AG04450 (cell line): ENCODE measurements at regions of chr1 and their contacts with region 1.

Region 1: GRCh38 chr1:207885129-207886032 is 25.5 kb downstream of the CD34 start:
- DNase-seq: peak; percentile 76
- H3K4me3 ChIP-seq: no peak overlapping the region
- H3K27ac ChIP-seq: no peak overlapping the region
- H3K27me3 ChIP-seq: peaks cover 3% of the 10 kb centered on the region
- CTCF ChIP-seq: peak; percentile 98

Region 2: DNA sequence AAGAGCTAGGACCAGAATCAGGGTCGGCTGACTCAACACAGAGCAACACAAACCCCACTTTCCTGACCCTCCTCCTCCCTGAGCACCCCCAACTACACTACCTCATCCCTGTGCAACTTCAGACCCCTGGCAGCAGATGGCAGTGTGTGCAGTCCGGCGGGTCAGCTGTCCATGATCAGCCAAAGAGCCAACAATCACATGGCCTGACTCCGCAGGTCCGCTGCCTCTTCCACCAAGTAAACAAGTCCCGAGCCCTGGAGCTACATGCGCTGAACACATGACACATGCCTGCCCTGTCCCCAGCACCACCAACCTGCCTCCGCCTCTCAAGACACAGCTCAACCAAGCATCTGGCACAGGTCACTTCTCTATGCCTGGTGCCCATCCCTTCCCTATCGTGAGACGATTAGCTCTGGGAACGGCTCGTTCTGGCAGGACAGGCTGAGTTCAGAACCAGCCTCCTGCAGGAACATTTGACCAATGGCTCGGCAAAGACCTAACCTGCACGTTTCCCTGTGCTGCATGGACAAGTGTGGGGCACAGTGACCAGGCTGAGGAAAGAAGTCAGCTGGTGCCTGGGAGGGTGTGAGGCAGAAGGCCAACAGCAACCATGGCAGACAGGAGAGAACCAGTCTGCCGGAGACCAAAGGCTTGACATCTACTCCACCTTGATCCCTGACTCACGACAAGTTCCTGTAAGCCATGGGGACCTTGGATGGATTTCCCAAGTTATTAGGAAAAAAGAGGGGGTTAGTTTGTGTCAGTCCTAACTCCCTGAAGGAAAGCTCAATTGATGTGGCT is 73.3 kb before region 1 on chr1:
- CTCF ChIA-PET with region 1: interaction called, 12 read pairs
- POLR2A ChIA-PET with region 1: no interaction called
- DNase-seq: no peak
- H3K4me3 ChIP-seq: no peak overlapping the region
- H3K27ac ChIP-seq: no peak overlapping the region
- H3K27me3 ChIP-seq: no peaks in the 10 kb centered on the region
- CTCF ChIP-seq: peak; percentile 45

Region 3: DNA sequence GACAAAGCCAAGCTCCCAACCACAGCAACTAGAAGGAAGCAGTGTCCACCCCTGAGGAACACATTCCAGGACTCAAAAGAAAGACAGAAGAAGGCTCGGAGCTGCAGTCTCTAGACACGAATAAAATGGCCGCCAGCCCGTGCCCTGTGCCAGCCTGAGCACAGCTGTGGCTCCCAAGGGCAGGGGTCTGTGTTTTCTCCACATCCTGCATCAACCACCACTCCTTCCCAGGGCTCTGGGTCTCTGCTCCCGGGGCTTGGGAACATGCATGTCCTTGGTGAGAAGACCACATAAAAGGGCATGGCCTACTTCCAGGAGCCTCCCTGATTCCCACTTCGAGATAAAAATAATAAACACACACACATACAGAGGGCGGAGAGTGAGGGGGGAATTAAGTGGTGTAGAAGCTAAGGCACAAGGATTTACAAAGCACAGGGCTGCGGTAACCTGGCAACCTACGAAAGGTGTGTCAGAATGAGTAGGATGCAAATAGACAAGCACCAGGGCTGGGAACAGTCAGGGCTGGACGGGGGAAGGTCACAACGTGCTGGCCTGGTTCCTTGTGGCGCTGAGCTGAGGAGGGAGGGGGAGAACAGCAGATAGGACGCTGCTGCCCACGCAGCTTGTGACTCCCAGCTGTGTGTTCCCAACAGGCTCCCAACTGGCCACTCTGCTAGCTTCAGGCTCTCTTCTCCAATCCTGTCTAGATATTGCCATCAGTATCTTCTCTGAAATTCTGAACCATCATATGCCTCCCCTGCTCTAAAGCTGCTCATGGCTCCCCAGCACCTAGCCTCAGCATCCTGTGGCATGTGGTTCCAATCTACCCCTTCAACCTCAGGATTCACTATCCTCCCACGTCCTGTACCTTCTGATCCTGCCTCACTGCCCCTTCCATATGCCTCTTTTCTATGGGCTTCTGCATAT is 47.0 kb before region 1 on chr1:
- CTCF ChIA-PET with region 1: interaction called, 13 read pairs
- POLR2A ChIA-PET with region 1: no interaction called
- DNase-seq: no peak
- H3K4me3 ChIP-seq: no peak overlapping the region
- H3K27ac ChIP-seq: no peak overlapping the region
- H3K27me3 ChIP-seq: no peaks in the 10 kb centered on the region
- CTCF ChIP-seq: no peak

Region 4: GRCh38 chr1:207897188-207897587 is 11.8 kb after region 1 on chr1:
- CTCF ChIA-PET with region 1: interaction called, 73 read pairs
- POLR2A ChIA-PET with region 1: no interaction called
- DNase-seq: no peak
- H3K4me3 ChIP-seq: no peak overlapping the region
- H3K27ac ChIP-seq: no peak overlapping the region
- H3K27me3 ChIP-seq: no peaks in the 10 kb centered on the region
- CTCF ChIP-seq: peak; percentile 42

Region 5: DNA sequence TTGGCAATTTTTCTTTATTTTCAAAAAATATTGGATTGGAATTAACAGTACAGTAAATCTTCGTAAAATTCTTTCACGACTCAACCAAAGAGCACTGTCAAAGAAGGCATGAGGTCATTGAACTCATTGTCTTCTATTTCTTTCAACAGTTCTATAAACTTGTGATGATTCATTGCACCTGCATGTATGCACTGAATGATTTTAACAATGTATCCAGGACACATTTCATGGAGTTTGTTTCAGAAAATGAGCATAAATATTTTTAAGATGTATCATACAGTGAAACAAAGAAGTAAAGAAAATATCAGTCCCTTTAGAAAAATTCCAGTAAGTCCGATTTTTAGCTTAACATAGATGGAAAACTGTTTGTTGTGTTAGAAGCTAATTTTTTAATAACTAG is 59.2 kb after region 1 on chr1:
- CTCF ChIA-PET with region 1: interaction called, 28 read pairs
- POLR2A ChIA-PET with region 1: no interaction called
- DNase-seq: no peak
- H3K4me3 ChIP-seq: no peak overlapping the region
- H3K27ac ChIP-seq: no peak overlapping the region
- H3K27me3 ChIP-seq: no peaks in the 10 kb centered on the region
- CTCF ChIP-seq: no peak

Region 6: GRCh38 chr1:208029381-208030287 is 144.3 kb after region 1 on chr1:
- CTCF ChIA-PET with region 1: interaction called, 31 read pairs
- POLR2A ChIA-PET with region 1: no interaction called
- DNase-seq: peak; percentile 33
- H3K4me3 ChIP-seq: no peak overlapping the region; the same call in 1 of the 2 replicates
- H3K27ac ChIP-seq: peak overlapping the region; percentile 73
- H3K27me3 ChIP-seq: no peaks in the 10 kb centered on the region
- CTCF ChIP-seq: no peak

Region 7: DNA sequence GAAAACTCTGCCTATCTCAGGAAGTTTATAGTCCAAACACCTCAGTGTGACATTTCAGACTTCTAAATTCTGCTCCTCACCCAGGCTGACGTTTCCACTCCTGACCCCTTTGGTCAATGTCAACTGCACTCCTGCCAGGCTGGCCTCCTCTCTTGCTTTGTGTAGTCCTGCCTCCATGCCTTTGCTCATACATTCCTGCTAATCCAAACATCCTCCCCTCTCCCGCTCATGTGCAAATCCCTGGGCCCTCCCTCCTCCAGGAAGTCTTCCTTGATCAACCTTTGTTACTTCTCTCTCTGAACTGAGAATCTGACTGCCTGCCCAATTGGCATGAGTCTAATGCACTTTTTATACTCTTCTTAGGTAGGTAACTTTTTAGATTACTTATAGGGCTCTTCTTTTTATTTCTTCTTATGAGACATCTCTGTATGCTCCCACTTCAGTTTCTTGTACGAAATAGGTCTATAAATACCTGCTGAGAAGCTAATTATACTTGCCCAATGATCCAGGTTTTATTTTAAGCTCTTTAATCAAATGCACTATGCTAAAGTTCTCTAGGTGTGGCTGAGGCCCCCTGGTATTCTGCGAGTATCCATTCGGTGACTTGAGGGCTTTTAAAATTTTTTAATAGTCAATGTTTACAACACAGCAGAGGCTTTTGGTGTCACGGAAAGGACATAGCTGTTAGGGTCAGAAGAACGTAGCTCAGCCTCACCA is 230.7 kb after region 1 on chr1:
- CTCF ChIA-PET with region 1: no interaction called
- POLR2A ChIA-PET with region 1: no interaction called
- DNase-seq: no peak
- H3K4me3 ChIP-seq: no peak overlapping the region
- H3K27ac ChIP-seq: no peak overlapping the region
- H3K27me3 ChIP-seq: no peaks in the 10 kb centered on the region
- CTCF ChIP-seq: no peak

Region 8: GRCh38 chr1:208132287-208132883 is 247.0 kb after region 1 on chr1:
- CTCF ChIA-PET with region 1: no interaction called
- POLR2A ChIA-PET with region 1: no interaction called
- DNase-seq: no peak
- H3K4me3 ChIP-seq: no peak overlapping the region
- H3K27ac ChIP-seq: no peak overlapping the region
- H3K27me3 ChIP-seq: peaks cover 2% of the 10 kb centered on the region
- CTCF ChIP-seq: peak; percentile 73

Region 9: GRCh38 chr1:208149776-208150514 is 264.6 kb after region 1 on chr1:
- CTCF ChIA-PET with region 1: no interaction called
- POLR2A ChIA-PET with region 1: no interaction called
- DNase-seq: no peak
- H3K4me3 ChIP-seq: no peak overlapping the region
- H3K27ac ChIP-seq: no peak overlapping the region
- H3K27me3 ChIP-seq: no peaks in the 10 kb centered on the region
- CTCF ChIP-seq: no peak